Dendritic cell treated with granulocyte-macrophage colony-stimulating factor and Interleukin-4, amounts not matched to agents 40 ng/mL and 50 ng/mL, for 4 days (primary cell): ENCODE measurements at regions of chr3 and their contacts with region 1.

Region 1: GRCh38 chr3:160399125-160400029 is at the starts of genes IFT80 and SMC4:
- H3K4me3 Mint-ChIP-seq: peak within 1 kb of the TSS; percentile 81
- H3K27ac Mint-ChIP-seq: peak within 1 kb of the TSS; percentile 96
- H3K4me1 Mint-ChIP-seq: peaks cover 35% of the 10 kb centered on the region
- H3K27me3 Mint-ChIP-seq: no peaks in the 10 kb centered on the region

Region 2: DNA sequence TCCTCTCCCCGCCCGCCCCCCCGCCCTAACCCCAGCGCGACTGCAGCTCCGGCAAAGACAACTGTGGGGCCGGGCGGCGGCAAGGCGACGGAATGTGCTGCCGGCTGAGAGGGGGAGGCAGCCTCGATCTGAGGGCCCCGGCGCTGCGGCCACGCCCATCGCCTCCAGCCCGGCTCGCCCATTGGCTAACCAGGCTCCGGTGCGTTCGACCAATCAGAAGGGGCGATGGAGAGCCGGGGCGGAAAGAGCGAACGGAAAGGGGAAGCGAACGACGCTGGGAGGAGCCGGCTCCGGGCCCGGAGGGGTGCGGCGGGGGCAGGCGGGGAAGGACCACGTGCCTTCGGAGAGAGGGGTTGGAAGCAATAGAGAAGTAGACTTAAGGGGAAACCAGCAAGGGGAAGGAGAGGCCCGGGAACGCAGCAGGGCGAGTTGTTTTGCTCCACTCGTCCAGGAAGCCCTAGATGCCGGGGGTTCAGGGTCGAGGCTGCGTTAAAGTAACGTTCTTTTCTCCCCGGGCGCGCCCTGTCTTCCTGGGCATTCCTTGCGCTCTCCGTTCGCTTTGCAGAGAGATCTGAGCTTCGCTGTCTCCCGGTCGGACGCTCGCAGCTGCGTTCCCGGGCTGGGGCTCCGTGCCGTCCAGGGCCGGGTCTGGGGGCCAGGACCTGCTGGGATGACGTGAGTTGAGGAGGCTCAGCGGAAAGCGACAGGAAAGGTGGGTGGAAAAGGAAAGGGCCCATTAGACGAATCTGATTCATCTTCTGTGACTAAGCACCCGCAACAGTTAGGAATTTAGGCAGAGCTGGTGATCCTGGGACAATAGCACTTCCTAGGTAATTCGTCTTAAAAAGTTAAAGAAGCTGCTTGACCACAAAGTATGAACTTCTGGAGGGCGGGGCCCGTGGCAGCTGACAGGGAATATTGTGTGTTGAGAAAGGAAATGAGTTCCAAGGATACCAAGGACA is 166.3 kb after region 1 on chr3 and contains the start of gene KPNA4:
- intact Hi-C with region 1: loop called (anchors 10 kb)
- H3K4me3 Mint-ChIP-seq: peak within 1 kb of the TSS; percentile 95
- H3K27ac Mint-ChIP-seq: peak within 1 kb of the TSS; percentile 100
- H3K4me1 Mint-ChIP-seq: peaks cover 57% of the 10 kb centered on the region
- H3K27me3 Mint-ChIP-seq: no peaks in the 10 kb centered on the region